ENCODE measurements at regions of chr14 and their contacts with region 1.

Region 1: GRCh38 chr14:92880869-92881289 is 42.1 kb upstream of the CHGA start:
- DNase-seq: peak; percentile 58
- H3K4me3 ChIP-seq: no peak overlapping the region
- H3K27ac ChIP-seq: no peak overlapping the region
- H3K4me1 ChIP-seq: no peaks in the 10 kb centered on the region
- H3K27me3 ChIP-seq: peaks cover 2% of the 10 kb centered on the region
- CTCF ChIP-seq: peak; percentile 55 to 65

Region 2: GRCh38 chr14:92800012-92800411 is 80.9 kb before region 1 on chr14:
- CTCF ChIA-PET with region 1: no interaction called
- dilution Hi-C with region 1: no loop called
- in situ Hi-C with region 1: no loop called
- intact Hi-C with region 1: no loop called
- DNase-seq: no peak
- H3K4me3 ChIP-seq: no peak overlapping the region
- H3K27ac ChIP-seq: no peak overlapping the region
- H3K4me1 ChIP-seq: no peaks in the 10 kb centered on the region
- H3K27me3 ChIP-seq: no peaks in the 10 kb centered on the region
- CTCF ChIP-seq: no peak

Region 3: GRCh38 chr14:92930737-92931602 is 50.1 kb after region 1 on chr14:
- CTCF ChIA-PET with region 1: no interaction called
- dilution Hi-C with region 1: no loop called
- in situ Hi-C with region 1: no loop called
- intact Hi-C with region 1: loop called (anchors 5 kb)
- DNase-seq: peak; percentile 75
- H3K4me3 ChIP-seq: no peak overlapping the region
- H3K27ac ChIP-seq: no peak overlapping the region
- H3K4me1 ChIP-seq: peaks cover 33% of the 10 kb centered on the region
- H3K27me3 ChIP-seq: no peaks in the 10 kb centered on the region
- CTCF ChIP-seq: no peak

Region 4: GRCh38 chr14:93035917-93036651 is 155.2 kb after region 1 on chr14:
- CTCF ChIA-PET with region 1: no interaction called
- dilution Hi-C with region 1: no loop called
- in situ Hi-C with region 1: no loop called
- intact Hi-C with region 1: loop called (anchors 5 kb)
- DNase-seq: peak; percentile 38
- H3K4me3 ChIP-seq: no peak overlapping the region
- H3K27ac ChIP-seq: peak overlapping the region; percentile 59
- H3K4me1 ChIP-seq: peaks cover 73% of the 10 kb centered on the region
- H3K27me3 ChIP-seq: no peaks in the 10 kb centered on the region
- CTCF ChIP-seq: no peak

Region 5: DNA sequence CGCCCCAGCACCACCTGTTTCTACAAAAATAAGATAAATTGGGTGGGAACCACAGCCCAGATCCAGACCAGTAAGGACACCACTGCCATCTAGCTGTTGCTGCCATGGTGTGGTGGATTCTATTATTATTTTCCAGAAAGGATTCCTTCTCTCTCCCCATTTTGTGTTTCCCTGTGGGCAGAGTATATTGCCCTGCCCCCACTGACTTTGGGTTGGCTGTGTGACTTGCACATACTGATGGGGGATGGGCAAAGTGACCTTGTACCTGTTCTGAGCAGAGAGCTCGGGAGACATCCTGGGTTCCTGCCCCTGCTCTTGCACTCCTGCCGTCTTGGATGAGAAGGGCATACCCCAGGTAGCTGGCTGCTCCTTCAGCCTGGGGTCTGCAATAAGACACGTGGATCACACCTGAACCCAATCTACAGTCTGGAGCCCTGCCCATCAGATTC is 279.5 kb after region 1 on chr14:
- CTCF ChIA-PET with region 1: interaction called, 3 read pairs
- dilution Hi-C with region 1: no loop called
- in situ Hi-C with region 1: no loop called
- intact Hi-C with region 1: loop called (anchors 1 kb)
- DNase-seq: no peak
- H3K4me3 ChIP-seq: no peak overlapping the region
- H3K27ac ChIP-seq: no peak overlapping the region
- H3K4me1 ChIP-seq: no peaks in the 10 kb centered on the region
- H3K27me3 ChIP-seq: no peaks in the 10 kb centered on the region
- CTCF ChIP-seq: peak; percentile 41 to 59

Region 6: DNA sequence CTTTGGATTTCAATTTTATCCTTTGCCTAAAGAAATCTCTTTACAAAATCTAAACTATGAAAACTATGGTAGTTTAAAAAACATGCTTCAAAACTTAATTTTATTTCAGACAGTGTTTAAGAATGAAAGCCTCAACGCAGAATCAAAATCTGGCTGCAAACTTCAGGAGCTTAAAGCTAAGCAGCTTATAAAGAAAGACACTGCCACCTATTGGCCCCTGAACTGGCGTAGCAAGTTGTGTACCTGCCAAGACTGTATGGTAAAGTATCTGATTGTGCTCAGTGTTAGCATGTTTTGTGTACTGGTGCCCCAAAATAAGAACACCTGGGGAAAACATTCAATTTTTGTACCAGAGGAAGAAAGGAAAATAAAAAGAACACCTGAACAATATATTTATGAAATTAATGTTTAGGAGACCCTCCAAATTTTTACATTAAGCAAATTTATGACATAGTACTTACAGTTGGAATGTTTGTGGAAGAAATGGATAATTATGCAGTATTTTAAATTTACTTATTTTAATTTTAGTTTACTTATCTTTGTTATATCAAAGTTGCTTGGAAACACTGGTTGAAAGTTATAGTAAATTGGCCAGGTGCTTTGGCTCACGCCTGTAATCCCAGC is 338.3 kb after region 1 on chr14:
- CTCF ChIA-PET with region 1: interaction called, 10 read pairs
- dilution Hi-C with region 1: no loop called
- in situ Hi-C with region 1: no loop called
- intact Hi-C with region 1: loop called (anchors 1 kb)
- DNase-seq: peak; percentile 51
- H3K4me3 ChIP-seq: no peak overlapping the region
- H3K27ac ChIP-seq: no peak overlapping the region
- H3K4me1 ChIP-seq: no peaks in the 10 kb centered on the region
- H3K27me3 ChIP-seq: no peaks in the 10 kb centered on the region
- CTCF ChIP-seq: peak; percentile 75 to 78

Measured in mammary epithelial cell (primary cell).